A673 (cell line): ENCODE measurements at regions of chr1 and their contacts with region 1.

Region 1: DNA sequence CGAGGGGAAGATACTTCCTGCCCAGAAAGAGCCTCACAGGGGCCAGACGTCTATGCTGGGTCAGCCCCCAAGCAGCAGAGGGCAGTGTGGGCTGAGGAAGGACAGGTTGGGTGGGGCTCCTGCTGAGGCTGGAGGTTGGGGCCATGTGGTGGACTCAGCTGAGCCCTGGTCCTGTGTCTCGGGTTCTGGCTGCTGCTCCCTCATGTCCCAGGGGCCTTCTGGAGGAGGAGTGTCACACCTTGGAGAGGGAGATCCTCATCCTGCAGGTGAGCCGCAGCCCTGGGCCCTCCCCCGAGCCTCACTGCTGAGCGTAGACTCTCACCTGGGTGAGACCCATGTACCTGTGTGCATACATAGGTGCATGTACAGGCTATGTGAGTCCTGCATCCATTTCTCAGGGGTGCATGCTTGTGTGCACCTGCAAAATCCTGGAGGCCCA is 3.5 kb downstream of the CCDC24 start:
- DNase-seq: no peak
- H3K4me3 ChIP-seq: no peak overlapping the region
- H3K27ac ChIP-seq: no peak overlapping the region
- H3K4me1 ChIP-seq: peaks cover 19% of the 10 kb centered on the region
- H3K27me3 ChIP-seq: no peaks in the 10 kb centered on the region
- CTCF ChIP-seq: no peak

Region 2: GRCh38 chr1:43719063-43719462 is 275.9 kb before region 1 on chr1:
- CTCF ChIA-PET with region 1: no interaction called
- POLR2A ChIA-PET with region 1: no interaction called
- intact Hi-C with region 1: no loop called
- DNase-seq: peak; percentile 27
- H3K4me3 ChIP-seq: no peak overlapping the region
- H3K27ac ChIP-seq: peak overlapping the region; percentile 45
- H3K4me1 ChIP-seq: peaks cover 13% of the 10 kb centered on the region
- H3K27me3 ChIP-seq: no peaks in the 10 kb centered on the region
- CTCF ChIP-seq: no peak

Region 3: DNA sequence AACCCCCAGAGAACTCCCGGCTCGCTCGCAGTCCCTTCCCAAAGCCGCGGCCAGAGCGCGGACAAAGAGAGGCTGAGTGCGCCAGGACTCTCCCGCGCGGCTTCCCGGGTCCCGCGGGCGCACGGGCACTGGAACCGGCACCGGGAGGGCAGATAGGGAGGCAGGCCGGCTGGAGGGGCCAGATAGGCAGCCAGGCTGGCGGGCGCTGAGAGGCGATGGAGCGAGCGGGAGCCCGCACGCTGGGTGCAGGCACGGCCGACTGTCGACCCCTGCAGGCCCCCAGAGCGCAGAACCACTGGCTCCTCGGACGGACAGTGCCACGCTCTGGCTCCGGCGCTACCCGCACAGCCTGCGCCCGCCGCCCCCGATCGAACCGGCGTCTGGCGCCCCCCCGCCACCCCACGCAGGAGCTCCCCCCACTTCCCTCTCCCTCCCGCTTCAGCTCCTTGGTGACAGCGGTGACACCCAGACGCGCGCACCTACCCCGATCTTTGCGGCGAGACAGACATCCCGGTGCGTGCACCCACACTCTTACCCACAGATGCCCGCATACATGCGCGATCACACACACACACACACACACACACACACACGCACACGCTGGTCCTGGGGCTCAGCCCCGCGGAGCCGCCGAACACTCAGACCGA is 35.8 kb after region 1 on chr1:
- CTCF ChIA-PET with region 1: interaction called, 4 read pairs
- POLR2A ChIA-PET with region 1: interaction called, 10 read pairs
- intact Hi-C with region 1: no loop called
- DNase-seq: peak; percentile 51
- H3K4me3 ChIP-seq: peak overlapping the region; percentile 91
- H3K27ac ChIP-seq: peak overlapping the region; percentile 90
- H3K4me1 ChIP-seq: peaks cover 13% of the 10 kb centered on the region
- H3K27me3 ChIP-seq: no peaks in the 10 kb centered on the region
- CTCF ChIP-seq: no peak; the same call in 1 of the 2 replicates

Region 4: GRCh38 chr1:44084998-44085675 is 90.2 kb after region 1 on chr1:
- CTCF ChIA-PET with region 1: no interaction called
- POLR2A ChIA-PET with region 1: no interaction called
- intact Hi-C with region 1: no loop called
- DNase-seq: peak; percentile 14
- H3K4me3 ChIP-seq: no peak overlapping the region
- H3K27ac ChIP-seq: no peak overlapping the region
- H3K4me1 ChIP-seq: no peaks in the 10 kb centered on the region
- H3K27me3 ChIP-seq: peaks cover 3% of the 10 kb centered on the region
- CTCF ChIP-seq: no peak